Activated naive CD8-positive, alpha-beta T cell treated with anti-CD3 and anti-CD28 coated beads, Interleukin-2, amount 10 ng/mL, durations not matched to agents 7 days and 5 days (primary cell): ENCODE measurements at regions of chr22 and their contacts with region 1.

Region 1: GRCh38 chr22:41468381-41469217 is at the starts of genes ACO2 and PHF5A:
- DNase-seq: peak; percentile 97
- ATAC-seq: peak; percentile 91
- H3K4me3 Mint-ChIP-seq: peak within 1 kb of the TSS; percentile 94
- H3K27ac Mint-ChIP-seq: peak within 1 kb of the TSS; percentile 100
- H3K4me1 Mint-ChIP-seq: peaks cover 39% of the 10 kb centered on the region
- H3K27me3 Mint-ChIP-seq: no peaks in the 10 kb centered on the region
- total RNA-seq, gene ACO2: 73.7 to 76.2 TPM
- total RNA-seq, gene PHF5A: 47.0 to 51.0 TPM

Region 2: GRCh38 chr22:41381329-41382097 is 87.1 kb before region 1 on chr22 and contains the start of gene TEF:
- POLR2A ChIA-PET with region 1: interaction called, 13 read pairs
- DNase-seq: peak; percentile 98
- ATAC-seq: peak; percentile 94
- H3K4me3 Mint-ChIP-seq: peak within 1 kb of the TSS; percentile 89
- H3K27ac Mint-ChIP-seq: peak within 1 kb of the TSS; percentile 96
- H3K4me1 Mint-ChIP-seq: peaks cover 5% of the 10 kb centered on the region
- H3K27me3 Mint-ChIP-seq: peaks cover 4% of the 10 kb centered on the region
- total RNA-seq, gene TEF: 3.6 to 4.0 TPM

Region 3: GRCh38 chr22:41403532-41404318 is 64.9 kb before region 1 on chr22:
- POLR2A ChIA-PET with region 1: interaction called, 13 read pairs
- DNase-seq: peak; percentile 81
- ATAC-seq: peak; percentile 99
- H3K4me3 Mint-ChIP-seq: peak overlapping the region; percentile 49
- H3K27ac Mint-ChIP-seq: peak overlapping the region; percentile 70
- H3K4me1 Mint-ChIP-seq: peaks cover 5% of the 10 kb centered on the region
- H3K27me3 Mint-ChIP-seq: no peaks in the 10 kb centered on the region